ENCODE measurements at regions of chr9 and their contacts with region 1.

Region 1: DNA sequence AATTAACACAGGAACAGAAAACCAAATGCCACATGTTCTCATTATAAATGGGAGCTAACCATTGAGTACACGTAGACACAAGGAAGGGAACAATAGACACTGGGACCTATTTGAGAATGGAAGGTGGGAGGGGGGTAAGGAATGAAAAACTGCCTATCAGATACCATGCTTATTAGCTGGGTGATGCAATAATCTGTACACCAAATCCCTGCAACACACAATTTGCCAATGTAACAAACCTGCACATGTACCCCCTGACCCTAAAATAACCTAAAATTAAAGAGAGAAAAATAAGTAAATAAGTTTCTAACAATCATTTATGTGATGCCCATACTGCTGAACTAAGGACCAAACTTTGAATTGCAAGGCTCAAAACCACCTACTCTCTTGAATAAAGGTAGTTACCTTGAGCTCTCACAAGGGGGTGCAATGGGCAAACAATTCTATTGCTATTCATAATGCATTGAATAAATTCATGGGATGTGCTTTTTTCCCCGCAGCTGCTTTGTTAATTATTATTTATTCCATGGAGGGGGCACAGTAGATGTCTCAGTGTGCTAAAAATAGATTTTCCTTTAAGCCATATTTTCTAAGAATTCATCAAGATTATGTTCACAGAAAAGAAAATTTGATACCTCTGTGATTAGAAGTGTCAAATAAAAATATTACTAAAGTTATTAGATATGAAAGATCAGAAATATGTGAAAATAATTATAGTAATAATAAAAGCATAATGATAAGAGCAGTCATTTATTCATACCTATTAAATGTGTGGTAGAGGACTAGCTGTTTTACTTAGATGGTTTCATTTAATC is 76.2 kb upstream of the PTPN3 start:
- DNase-seq: peak; percentile 55
- H3K4me3 Mint-ChIP-seq: no peak overlapping the region
- H3K27ac Mint-ChIP-seq: no peak overlapping the region
- H3K4me1 Mint-ChIP-seq: peaks cover 14% of the 10 kb centered on the region
- H3K27me3 Mint-ChIP-seq: no peaks in the 10 kb centered on the region
- CTCF ChIP-seq: peak; percentile 37

Region 2: DNA sequence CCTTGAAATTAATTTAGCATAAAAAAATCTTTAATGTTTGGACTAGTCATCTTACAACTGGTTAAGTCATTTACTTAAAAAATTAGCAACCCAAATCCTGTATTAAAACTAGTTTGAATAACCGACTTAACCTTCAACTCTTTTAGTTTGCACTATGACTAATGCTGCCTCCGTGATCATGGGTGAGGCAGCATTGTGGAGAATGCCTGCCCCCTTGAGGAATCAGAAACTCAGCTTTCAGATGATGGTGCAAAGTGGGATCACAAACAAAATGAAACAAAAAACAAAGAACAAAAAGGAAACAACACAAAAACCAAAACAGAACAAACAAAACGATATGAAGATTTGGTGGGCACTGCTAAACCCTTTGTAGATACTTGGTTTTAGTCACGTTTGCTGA is 78.7 kb after region 1 on chr9:
- CTCF ChIA-PET with region 1: no interaction called
- intact Hi-C with region 1: loop called (anchors 1 kb)
- DNase-seq: peak; percentile 32
- H3K4me3 Mint-ChIP-seq: no peak overlapping the region
- H3K27ac Mint-ChIP-seq: no peak overlapping the region
- H3K4me1 Mint-ChIP-seq: no peaks in the 10 kb centered on the region
- H3K27me3 Mint-ChIP-seq: peaks cover 26% of the 10 kb centered on the region
- CTCF ChIP-seq: peak; percentile 15

Region 3: GRCh38 chr9:109817846-109818472 is 243.7 kb after region 1 on chr9:
- CTCF ChIA-PET with region 1: interaction called, 9 read pairs
- intact Hi-C with region 1: loop called (anchors 1 kb)
- DNase-seq: peak; percentile 72
- H3K4me3 Mint-ChIP-seq: no peak overlapping the region
- H3K27ac Mint-ChIP-seq: no peak overlapping the region
- H3K4me1 Mint-ChIP-seq: no peaks in the 10 kb centered on the region
- H3K27me3 Mint-ChIP-seq: peaks cover 14% of the 10 kb centered on the region
- CTCF ChIP-seq: peak; percentile 53

Region 4: GRCh38 chr9:109887079-109887478 is 312.8 kb after region 1 on chr9:
- CTCF ChIA-PET with region 1: no interaction called
- intact Hi-C with region 1: loop called (anchors 5 kb)
- DNase-seq: no peak
- H3K4me3 Mint-ChIP-seq: no peak overlapping the region
- H3K27ac Mint-ChIP-seq: no peak overlapping the region
- H3K4me1 Mint-ChIP-seq: no peaks in the 10 kb centered on the region
- H3K27me3 Mint-ChIP-seq: no peaks in the 10 kb centered on the region
- CTCF ChIP-seq: no peak

Region 5: DNA sequence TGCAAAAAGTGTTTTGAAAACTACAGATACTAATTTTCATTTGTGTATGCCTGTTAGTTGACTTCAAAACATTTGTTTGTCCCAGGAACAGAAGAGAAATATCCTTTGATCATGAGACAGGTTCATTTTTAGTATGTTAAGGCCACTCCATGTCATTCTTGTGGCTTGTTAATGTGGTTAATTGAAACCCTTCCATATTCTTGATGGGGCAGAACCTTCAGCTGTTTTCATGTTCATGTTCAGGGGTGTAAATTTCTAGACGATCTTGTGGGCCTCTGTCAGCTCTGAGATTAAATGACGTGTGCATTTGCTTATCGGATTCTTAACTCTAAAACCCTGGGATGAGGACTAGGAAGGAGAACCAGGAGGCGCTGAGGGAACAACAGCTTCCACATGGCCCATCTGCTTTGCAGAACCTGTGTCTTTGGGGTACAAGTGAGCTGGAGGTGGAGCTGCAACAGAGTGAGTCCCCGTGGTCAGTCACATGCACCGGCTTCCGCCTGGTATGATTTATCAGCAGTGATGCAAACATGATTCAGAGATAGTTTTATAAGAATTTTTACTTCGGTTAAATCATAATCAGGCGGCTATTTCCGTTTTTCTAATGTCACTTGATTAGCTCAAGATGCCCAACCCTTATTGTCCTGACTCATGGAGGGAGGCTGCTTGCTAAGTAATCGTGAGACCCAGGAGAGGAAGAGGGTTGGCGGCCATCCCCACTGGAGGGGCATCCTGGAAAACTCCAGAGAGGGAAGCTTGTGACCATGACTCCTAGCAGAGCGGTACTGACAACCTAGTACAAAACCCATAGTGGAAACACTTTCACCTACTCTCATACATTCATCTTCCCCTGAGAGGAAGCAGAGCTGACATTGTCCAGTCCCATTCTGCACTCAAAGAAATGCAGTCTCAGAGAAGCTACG is 495.3 kb after region 1 on chr9:
- CTCF ChIA-PET with region 1: no interaction called
- intact Hi-C with region 1: loop called (anchors 5 kb)
- DNase-seq: peak; percentile 28
- H3K4me3 Mint-ChIP-seq: peak overlapping the region; percentile 47
- H3K27ac Mint-ChIP-seq: peak overlapping the region; percentile 85
- H3K4me1 Mint-ChIP-seq: peaks cover 17% of the 10 kb centered on the region
- H3K27me3 Mint-ChIP-seq: no peaks in the 10 kb centered on the region
- CTCF ChIP-seq: no peak

Region 6: DNA sequence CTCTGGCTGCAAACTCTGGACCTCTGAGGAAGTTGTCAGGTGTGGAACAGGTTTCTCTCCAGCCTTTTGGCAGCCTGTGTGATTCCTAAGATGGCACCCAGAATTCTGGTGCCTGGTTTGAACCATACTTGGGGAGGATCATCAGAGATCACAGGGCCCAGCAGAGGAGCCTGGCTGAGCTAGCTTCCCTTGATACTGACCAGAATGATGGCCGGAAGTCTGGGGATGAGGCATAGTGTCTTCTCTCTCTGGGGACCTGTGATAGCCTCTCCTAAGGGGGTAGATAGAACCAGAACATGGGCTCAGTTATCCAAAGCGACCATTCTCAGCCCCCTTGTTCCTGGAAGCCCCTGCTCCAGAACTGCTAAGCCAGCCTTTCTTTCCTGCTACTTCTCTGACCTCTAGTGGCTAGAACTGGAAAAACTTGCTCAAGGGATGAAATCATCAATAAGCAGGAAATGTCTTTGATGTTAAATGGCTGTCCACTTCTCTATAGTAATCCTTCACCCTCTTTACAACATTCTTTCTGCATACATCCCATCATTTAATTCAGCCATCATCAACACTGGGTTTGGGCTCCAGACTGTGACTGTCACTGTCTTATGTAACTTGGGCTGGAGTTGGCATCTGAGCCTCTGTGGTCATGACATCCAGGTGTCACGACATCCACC is 578.6 kb after region 1 on chr9:
- CTCF ChIA-PET with region 1: no interaction called
- intact Hi-C with region 1: loop called (anchors 10 kb)
- DNase-seq: peak; percentile 28
- H3K4me3 Mint-ChIP-seq: no peak overlapping the region
- H3K27ac Mint-ChIP-seq: no peak overlapping the region
- H3K4me1 Mint-ChIP-seq: peaks cover 9% of the 10 kb centered on the region
- H3K27me3 Mint-ChIP-seq: no peaks in the 10 kb centered on the region
- CTCF ChIP-seq: peak; percentile 51

Measured in Calu3 (cell line).